ENCODE measurements at regions of chr1 and their contacts with region 1.

Region 1: DNA sequence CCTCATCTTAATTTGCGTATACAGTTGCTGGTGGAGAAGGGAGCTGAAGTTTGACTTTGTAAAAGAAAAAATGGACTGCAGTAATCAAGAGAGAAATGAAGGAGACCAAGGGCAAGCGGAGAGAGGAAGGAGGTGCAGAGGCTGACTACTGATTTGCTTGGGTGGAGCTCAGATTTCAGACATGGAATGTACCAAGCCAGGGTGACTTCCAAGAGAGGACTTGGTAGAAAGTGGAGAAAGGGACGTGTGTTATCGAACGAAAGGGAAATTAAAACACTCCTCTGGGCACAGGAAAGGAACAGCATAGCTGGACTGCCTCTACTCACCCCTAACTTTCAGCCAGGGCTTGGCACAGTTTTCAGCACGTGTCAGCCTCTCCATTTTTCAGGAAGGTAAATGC is 15.1 kb upstream of the HEATR1 start:
- DNase-seq: no peak
- ATAC-seq: peak in 3 of 8 donors; percentile 31 to 39 (median 37)
- H3K4me3 ChIP-seq: no peak overlapping the region
- H3K27ac ChIP-seq: peak overlapping the region in 5 of 10 donors; percentile 25 to 50 (median 45)
- H3K4me1 ChIP-seq: no peaks in the 10 kb centered on the region
- H3K27me3 ChIP-seq: peaks cover 0 to 7% (median 0%) of the 10 kb centered on the region in 7 donors
- CTCF ChIP-seq: no peak

Region 2: DNA sequence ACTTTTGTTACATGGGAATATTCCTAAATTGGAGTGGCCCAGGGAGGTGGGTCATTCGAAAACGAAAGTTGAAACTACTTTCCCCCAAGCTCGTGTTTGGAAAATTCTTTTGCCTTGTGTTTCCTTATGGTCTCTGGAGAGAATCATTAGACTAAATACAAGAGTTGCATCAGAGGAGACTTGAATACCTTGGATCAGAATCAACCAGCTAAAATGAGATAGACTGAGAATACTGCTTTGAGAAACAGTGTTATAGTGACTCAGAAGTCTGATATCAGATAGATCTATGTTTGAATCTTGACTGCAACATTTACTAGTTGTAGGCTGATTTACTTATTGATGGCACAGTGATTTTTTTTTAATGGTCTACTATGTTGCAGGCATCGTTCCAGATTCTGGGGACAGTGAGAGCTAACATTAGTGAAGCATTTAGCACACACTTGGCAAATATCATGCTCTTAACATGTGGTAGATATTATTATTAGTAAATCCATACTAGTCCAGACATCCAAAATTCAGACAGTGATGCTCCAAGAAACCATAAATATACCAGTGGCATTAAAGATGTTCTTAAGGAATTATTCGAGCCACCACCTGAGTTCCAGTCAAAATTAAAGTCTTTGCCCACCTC is 54.0 kb after region 1 on chr1:
- intact Hi-C with region 1: loop called in 1 of 10 experiments (anchors 5 kb)
- DNase-seq: no peak
- ATAC-seq: peak; percentile 53 to 88 (median 76)
- H3K4me3 ChIP-seq: peak overlapping the region in 4 of 10 donors; percentile 10 to 31 (median 20)
- H3K27ac ChIP-seq: peak overlapping the region in 1 of 10 donors; percentile 16
- H3K4me1 ChIP-seq: peaks cover 0 to 18% (median 7%) of the 10 kb centered on the region in 9 donors
- H3K27me3 ChIP-seq: no peaks in the 10 kb centered on the region
- CTCF ChIP-seq: no peak

Region 3: DNA sequence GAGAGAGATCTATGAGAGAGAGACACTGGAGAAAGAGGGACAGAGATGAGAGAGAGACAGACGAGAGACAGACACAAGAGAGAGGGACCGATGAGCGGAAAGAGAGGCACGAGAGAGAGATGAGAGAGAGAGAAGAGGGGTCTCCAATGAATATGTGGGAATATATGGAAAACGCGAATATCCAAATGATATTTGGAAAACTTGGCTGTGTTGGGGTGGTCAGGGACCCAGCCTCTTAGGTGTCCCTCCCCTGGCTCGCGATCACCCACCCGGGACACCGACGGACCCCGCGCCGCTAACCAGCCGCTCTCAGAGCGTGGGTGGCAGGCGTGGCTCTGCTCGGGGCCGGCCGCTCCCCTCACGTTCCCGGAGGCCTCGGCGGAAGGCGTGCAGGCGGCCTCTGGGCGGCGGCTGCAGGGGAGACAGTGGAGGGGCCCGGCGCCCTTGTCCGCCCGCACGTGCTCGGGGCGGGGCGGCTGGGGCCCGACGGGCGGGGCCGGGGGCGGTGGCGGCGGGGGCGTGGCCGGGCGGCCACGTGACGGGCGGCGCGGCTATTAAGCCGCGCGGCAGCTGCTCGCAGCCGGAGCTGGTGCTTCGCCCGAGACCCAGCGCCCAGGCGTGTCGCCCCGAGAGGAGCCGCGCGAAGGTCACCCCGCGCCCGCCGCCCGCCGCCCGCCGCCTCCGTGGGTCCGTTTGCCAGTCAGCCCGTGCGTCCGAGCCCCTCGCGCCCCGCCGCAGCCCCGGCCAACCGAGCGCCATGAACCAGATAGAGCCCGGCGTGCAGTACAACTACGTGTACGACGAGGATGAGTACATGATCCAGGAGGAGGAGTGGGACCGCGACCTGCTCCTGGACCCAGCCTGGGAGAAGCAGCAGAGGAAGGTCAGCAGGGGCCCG is 66.8 kb after region 1 on chr1 and contains the start of gene ACTN2:
- intact Hi-C with region 1: loop called in 2 of 10 experiments (anchors 5 kb)
- DNase-seq: peak; percentile 54 to 77
- ATAC-seq: peak; percentile 22 to 81 (median 58)
- H3K4me3 ChIP-seq: peak within 1 kb of the TSS; percentile 42 to 74 (median 64)
- H3K27ac ChIP-seq: peak within 1 kb of the TSS; percentile 87 to 99 (median 95)
- H3K4me1 ChIP-seq: peaks cover 0 to 15% (median 4%) of the 10 kb centered on the region in 9 donors
- H3K27me3 ChIP-seq: peaks cover 0 to 45% (median 6%) of the 10 kb centered on the region in 7 donors
- CTCF ChIP-seq: no peak
- total RNA-seq, gene ACTN2: 2,366 to 4,290 (median 3,682) TPM

Region 4: GRCh38 chr1:236774926-236775325 is 155.5 kb after region 1 on chr1:
- intact Hi-C with region 1: loop called in 2 of 10 experiments (anchors 10 kb)
- DNase-seq: peak in 1 of 2 donors; percentile 16
- ATAC-seq: peak in 7 of 8 donors; percentile 41 to 74 (median 70)
- H3K4me3 ChIP-seq: no peak overlapping the region
- H3K27ac ChIP-seq: no peak overlapping the region
- H3K4me1 ChIP-seq: no peaks in the 10 kb centered on the region
- H3K27me3 ChIP-seq: peaks cover 0 to 4% (median 0%) of the 10 kb centered on the region in 7 donors
- CTCF ChIP-seq: peak in 8 of 9 donors; percentile 20 to 56 (median 38)

Region 5: DNA sequence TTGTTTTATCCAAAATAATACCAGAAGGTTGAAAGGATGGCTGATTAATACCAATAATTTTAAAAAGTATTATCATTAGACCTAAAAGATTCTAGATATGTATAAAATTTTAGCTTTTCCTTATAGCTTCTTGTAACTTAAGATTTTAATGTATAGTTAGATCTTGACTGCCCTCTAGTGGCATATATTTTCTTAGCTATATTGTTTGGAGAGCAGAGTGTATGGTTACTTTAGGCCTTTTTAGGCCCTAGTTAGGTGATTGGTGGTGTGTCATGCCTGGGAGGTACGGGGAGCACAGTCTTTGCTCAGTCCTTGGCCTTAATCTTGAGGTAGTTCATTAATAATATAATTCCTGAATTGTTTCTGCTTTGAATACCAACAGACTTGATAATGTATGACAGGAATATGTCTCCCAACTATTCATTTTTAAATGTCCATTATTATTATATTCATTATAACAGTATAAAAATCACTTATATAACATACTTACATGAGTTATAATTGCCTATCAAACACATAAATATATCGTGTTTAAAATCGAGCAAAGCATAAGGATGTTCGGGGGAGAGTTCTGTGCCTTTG is 942.9 kb after region 1 on chr1:
- intact Hi-C with region 1: loop called in 1 of 10 experiments (anchors 10 kb)
- DNase-seq: no peak
- ATAC-seq: peak in 1 of 8 donors; percentile 24
- H3K4me3 ChIP-seq: no peak overlapping the region
- H3K27ac ChIP-seq: no peak overlapping the region
- H3K4me1 ChIP-seq: peaks cover 0 to 55% (median 18%) of the 10 kb centered on the region in 9 donors
- H3K27me3 ChIP-seq: no peaks in the 10 kb centered on the region
- CTCF ChIP-seq: peak; percentile 12 to 67 (median 56)